Psoas muscle (tissue), 8 donors: ENCODE measurements at regions of chr19 and their contacts with region 1.

Region 1: DNA sequence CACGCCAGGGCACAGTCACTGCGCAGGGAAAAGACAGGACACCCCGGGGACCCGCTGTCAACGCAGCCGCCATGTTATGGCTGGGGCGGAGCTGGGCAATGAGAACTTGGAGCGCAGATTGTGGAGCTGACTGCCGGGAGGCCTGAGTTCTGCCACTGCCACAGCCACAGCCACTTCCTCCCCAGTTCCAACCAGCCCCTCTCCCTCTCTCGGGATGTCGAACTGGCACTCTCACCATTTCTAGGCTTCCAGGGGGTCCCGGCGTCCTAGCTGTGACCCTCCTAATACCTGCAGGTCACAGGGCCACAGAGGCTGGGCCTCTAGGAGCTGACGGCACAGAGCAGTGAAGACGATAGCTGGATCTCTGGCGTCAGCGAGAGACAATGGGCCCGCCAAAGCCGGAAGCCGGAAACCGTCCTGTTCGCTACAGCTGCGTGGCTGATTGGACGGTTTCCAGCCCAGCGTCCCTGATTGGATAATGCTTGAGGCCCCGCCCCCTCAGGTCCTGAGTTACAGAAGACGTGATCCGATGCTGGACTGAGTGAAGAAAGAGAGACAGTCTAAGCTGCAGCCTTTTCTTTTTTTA is at the start of gene ZNF506:
- DNase-seq: peak; percentile 99 to 100
- ATAC-seq: peak; percentile 98 to 99 (median 99)
- H3K4me3 ChIP-seq: peak within 1 kb of the TSS; percentile 89
- H3K27ac ChIP-seq: peak within 1 kb of the TSS; percentile 96
- H3K4me1 ChIP-seq: peaks cover 3% of the 10 kb centered on the region
- H3K27me3 ChIP-seq: no peaks in the 10 kb centered on the region
- CTCF ChIP-seq: no peak
- total RNA-seq, gene ZNF506: 6.8 to 12.5 (median 8.7) TPM

Region 2: DNA sequence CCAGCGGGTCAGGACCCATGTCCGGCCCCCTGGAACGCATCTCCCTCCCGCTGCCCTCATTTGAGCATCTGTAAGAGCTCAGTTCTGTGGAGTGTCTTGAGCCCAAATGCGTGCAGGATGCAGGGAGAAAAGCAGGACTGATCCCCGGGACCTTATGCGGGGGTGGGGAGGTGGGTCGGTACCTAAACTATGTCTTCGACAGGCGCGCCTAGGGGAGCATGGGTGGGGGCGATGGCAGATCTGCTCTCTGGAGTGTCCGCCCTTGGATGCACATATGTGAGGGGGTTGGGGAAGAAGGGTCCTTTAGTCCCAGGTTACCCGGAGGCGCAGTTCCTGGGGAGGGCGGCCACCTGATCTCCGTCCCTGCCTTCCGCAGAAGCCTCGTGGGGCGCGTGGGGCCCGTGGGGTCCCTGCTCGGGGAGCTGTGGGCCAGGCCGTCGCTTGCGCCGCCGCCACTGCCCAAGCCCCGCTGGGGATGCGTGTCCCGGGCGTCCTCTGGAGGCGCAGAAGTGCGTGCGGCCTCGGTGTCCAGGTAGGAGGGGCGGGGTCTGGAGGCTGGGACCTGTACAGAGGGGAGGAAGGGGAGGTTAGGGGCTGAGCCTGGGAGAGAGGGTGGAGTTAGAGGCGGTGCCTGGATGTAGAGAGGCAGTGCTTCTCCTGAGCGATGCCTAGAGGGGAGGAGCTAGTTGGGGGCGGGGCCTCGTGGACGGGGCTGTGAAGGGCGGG is 280.6 kb before region 1 on chr19:
- intact Hi-C with region 1: no loop called
- DNase-seq: peak in 1 of 2 donors; percentile 48
- ATAC-seq: peak in 3 of 4 donors; percentile 34 to 47 (median 38)
- H3K4me3 ChIP-seq: peak overlapping the region; percentile 28
- H3K27ac ChIP-seq: no peak overlapping the region
- H3K4me1 ChIP-seq: peaks cover 12% of the 10 kb centered on the region
- H3K27me3 ChIP-seq: peaks cover 0 to 69% (median 44%) of the 10 kb centered on the region in 3 donors
- CTCF ChIP-seq: no peak

Region 3: DNA sequence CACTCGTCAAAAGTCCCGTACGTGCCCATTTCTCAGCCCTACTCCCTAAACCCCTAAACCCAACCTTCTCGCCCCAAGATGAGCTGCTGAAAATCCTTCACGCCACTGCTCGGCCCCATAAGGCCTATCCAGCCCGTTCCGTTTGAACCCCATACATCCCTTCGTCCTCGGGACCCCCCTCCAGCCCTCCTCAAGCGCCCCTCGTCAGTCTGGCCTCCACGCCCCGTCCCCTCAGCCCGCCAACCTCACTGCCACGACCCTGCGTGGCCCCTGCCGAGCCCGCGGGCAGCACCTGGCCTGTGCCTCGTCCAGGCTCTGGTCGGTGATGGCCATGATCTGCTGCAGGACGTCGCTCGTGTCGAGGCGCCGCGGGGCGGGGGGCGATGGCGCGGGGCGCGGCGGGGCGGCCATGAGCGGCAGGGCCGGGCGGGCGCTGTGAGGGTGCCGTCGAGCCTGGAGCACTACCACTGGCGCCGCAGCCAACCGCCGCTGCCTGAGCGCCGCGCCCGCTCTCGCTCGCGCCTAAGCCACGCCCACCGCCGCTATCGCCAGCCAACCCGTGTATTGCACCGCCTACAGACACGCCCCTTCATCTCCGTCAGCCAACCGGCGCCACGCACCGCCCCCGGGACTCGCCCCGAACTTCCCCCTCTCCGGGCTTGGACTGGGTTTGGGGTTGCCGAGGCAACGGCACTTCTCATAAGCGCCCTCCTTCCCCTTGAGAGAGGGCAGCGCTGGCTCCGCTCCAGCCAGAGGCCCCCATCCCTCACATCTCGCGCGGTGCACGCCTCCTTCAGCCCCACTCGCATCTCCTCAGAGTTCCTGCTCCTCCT is 203.0 kb before region 1 on chr19 and contains the start of gene PBX4:
- intact Hi-C with region 1: no loop called
- DNase-seq: peak; percentile 87 to 93
- ATAC-seq: peak; percentile 84 to 93 (median 90)
- H3K4me3 ChIP-seq: peak within 1 kb of the TSS; percentile 44
- H3K27ac ChIP-seq: no peak within 1 kb of the TSS
- H3K4me1 ChIP-seq: no peaks in the 10 kb centered on the region
- H3K27me3 ChIP-seq: peaks cover 0 to 22% (median 0%) of the 10 kb centered on the region in 3 donors
- CTCF ChIP-seq: no peak
- total RNA-seq, gene PBX4: 0.17 TPM in 1 of 4 donors, not detected in the others

Region 4: DNA sequence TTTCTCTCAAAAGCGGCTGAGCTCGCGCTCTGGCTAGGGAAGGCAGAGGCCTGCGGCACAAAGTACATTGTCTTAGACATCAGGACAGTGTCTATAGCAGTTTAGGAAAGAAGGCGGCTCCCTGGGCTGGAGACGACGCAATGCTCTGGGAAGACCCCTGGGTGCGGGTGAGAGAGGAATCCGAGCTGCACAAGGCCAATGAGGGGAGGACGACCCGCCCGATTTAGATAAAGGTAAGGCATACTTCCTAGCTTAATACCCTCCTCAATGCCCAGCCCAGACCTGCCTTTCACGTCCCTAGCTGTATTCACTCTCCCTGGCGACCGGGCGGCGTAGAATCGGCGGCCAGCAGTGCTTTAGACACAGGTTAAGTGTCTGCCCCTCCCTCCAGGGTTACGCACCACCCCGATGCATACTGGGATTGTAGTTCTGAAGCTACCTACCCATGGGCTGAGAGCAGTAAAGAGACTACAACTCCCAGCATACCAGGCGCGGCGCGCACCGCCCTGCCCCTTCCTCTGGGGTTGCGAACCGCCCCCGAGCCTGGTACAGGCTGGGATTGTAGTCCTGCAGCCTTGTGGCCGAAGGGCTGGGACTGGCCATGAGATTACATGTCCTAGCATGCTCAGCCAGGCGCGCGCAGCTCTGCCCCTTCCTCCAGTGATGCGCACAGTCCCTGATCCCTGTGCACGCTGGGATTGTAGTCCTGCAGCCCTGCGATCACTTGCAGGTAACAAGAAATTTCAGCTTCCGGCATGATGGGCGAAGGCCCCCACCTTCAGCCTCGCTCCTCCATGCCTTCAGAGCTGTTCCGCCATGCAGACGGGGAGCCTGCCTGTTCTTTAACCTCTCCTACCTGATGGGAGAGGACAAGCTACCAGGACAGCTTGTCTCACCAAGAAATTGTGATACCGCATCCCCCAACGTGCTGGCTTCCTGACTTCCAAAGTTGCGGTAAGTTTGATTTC is 45.1 kb before region 1 on chr19:
- intact Hi-C with region 1: loop called in 1 of 2 experiments (anchors 2 kb)
- DNase-seq: peak; percentile 96 to 98
- ATAC-seq: peak; percentile 99 to 100 (median 100)
- H3K4me3 ChIP-seq: peak overlapping the region; percentile 83
- H3K27ac ChIP-seq: peak overlapping the region; percentile 83
- H3K4me1 ChIP-seq: peaks cover 16% of the 10 kb centered on the region
- H3K27me3 ChIP-seq: no peaks in the 10 kb centered on the region
- CTCF ChIP-seq: no peak

Region 5: DNA sequence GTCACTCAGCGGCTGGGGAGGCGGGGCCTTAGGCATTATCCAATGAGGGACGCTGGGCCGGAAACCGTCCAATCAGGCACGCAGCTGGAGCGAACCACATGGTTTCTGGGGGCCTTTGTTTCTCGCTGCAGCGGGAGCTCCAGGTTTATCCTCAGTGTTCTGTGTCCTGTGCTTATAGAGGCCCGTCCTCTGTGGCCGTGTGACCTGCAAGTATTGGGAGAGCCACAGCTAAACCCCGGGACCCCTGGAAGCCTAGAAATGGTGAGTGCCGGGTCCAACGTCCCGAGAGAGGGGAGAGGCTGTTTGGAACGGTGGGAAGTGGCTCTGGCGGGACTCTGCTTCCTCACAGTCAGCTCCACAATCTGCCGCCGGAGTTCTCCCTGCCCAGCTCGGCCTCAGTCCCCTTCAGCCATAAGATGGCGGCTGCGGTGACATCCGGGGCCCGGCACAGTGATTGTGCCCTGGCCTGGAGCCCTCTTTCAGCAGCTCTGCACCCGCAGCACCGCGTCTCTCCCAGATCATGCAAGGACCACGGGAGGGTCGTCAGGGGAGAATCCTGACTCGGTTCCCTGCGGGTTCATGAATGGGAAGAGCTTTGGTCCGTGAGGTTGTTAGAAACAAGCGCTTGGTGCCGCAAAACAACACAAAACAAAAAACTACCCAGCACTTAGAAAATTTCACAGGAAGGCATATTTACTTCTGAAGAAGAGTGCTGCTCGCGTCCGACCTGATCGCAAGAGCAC is 44.5 kb after region 1 on chr19 and contains the start of gene ZNF253:
- intact Hi-C with region 1: loop called in 1 of 2 experiments (anchors 2 kb)
- DNase-seq: peak; percentile 98
- ATAC-seq: peak; percentile 97 to 99 (median 99)
- H3K4me3 ChIP-seq: peak within 1 kb of the TSS; percentile 92
- H3K27ac ChIP-seq: peak within 1 kb of the TSS; percentile 95
- H3K4me1 ChIP-seq: peaks cover 35% of the 10 kb centered on the region
- H3K27me3 ChIP-seq: no peaks in the 10 kb centered on the region
- CTCF ChIP-seq: no peak
- total RNA-seq, gene ZNF253: 4.5 to 10.9 (median 6.5) TPM

Region 6: DNA sequence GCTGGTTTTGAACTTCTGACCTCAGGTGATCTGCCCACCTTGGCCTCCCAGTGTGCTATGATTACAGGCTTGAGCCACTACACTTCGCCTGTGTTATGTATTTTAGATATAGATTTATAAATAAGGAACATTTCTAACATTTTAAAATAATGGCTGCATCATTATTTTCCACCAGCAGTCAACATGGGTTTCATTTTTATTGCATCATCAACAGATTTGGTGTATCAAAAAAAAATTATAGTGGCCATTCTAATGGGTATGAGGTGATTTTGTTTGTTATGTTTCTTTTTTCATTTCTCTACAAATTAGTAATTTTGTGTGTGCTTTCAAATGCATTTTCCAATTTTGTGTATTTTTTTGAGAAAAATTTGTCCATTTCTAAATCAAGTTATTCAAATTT is 63.1 kb after region 1 on chr19:
- intact Hi-C with region 1: no loop called
- DNase-seq: no peak
- ATAC-seq: no peak
- H3K4me3 ChIP-seq: no peak overlapping the region
- H3K27ac ChIP-seq: no peak overlapping the region
- H3K4me1 ChIP-seq: no peaks in the 10 kb centered on the region
- H3K27me3 ChIP-seq: no peaks in the 10 kb centered on the region
- CTCF ChIP-seq: no peak

Region 7: GRCh38 chr19:19900729-19901444 is 79.4 kb after region 1 on chr19 and contains the start of gene ZNF93:
- intact Hi-C with region 1: loop called in 1 of 2 experiments (anchors 2 kb)
- DNase-seq: peak; percentile 91 to 93
- ATAC-seq: peak; percentile 98 to 99 (median 99)
- H3K4me3 ChIP-seq: peak within 1 kb of the TSS; percentile 81
- H3K27ac ChIP-seq: peak within 1 kb of the TSS; percentile 80
- H3K4me1 ChIP-seq: no peaks in the 10 kb centered on the region
- H3K27me3 ChIP-seq: no peaks in the 10 kb centered on the region
- CTCF ChIP-seq: no peak
- total RNA-seq, gene ZNF93: 0.69 to 2.3 (median 1.8) TPM